ENCODE measurements at regions of chr10 and their contacts with region 1.

Region 1: GRCh38 chr10:125375210-125375609 is 214.8 kb upstream of the CTBP2 start:
- DNase-seq: peak in 1 of 10 donors; percentile 16
- H3K4me3 ChIP-seq: no peak overlapping the region
- H3K27ac ChIP-seq: no peak overlapping the region
- H3K27me3 ChIP-seq: peaks cover 0 to 9% (median 0%) of the 10 kb centered on the region in 45 donors
- CTCF ChIP-seq: peak in 19 of 56 donors; percentile 10 to 50 (median 25)

Region 2: DNA sequence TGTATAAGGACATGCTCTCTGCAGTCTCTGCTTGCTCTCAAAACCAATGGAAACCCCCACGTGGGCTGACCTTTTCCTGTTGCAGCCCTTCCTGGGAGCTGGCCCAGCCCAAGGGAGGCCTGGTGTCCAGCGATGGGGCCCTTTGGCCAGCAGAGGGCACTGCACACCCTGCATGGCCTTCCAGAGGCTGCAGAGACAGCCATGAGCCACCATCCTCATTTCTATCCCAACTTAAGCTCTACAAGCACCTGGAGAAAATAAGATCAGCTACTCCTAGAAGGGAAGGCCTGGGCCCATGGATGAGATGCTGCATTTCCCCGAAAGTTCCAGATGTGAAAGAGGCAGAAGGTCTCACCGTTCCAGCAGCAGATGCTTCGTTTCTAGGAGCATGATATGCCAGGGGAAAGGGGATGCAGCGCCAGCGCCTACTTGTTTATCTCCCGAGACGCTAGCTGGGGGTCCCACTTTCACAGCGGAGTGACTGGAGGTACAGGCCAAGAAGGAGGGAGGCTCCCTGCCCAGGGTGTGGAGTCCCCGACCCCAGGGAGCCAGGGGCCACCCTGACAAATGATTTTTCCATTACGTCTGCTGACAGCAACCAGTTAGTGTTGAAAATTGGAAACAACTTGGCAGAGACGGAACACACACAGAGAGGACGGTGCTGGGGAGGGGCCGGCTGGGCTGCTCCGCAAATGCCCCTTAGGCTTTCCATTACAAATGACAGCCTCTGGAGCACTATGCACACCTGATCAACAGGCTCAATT is 326.9 kb before region 1 on chr10:
- intact Hi-C with region 1: loop called in 1 of 2 experiments (anchors 10 kb)
- DNase-seq: peak; percentile 78 to 93 (median 87)
- H3K4me3 ChIP-seq: peak overlapping the region in 2 of 59 donors; percentile 6 to 8
- H3K27ac ChIP-seq: peak overlapping the region in 26 of 59 donors; percentile 1 to 71 (median 34)
- H3K27me3 ChIP-seq: no peaks in the 10 kb centered on the region
- CTCF ChIP-seq: peak; percentile 71 to 99 (median 97)

Measured in dorsolateral prefrontal cortex (tissue), 120 donors.